ENCODE measurements at regions of chr6 and their contacts with region 1.

Region 1: DNA sequence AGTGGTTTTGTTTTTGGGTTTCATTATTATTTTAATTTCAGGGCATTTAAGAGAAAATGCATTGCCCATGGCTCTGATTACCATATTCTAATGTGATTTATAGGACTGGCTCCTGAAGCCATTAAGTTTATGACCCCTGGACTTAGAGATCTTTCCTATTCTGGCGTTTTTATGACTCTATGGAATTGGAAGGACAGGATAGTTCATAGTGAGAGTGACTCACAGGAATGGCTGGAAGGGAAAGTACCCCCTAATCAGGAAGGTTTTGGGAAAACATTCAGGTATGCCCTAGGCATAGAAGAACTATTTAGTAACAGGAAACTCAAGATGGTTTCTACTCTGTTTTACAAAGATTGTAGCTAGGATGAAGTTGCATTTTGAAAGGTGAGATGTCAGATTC is 108.6 kb upstream of the SLC2A12 start:
- DNase-seq: no peak
- ATAC-seq: peak in 1 of 2 donors; percentile 29

Region 2: DNA sequence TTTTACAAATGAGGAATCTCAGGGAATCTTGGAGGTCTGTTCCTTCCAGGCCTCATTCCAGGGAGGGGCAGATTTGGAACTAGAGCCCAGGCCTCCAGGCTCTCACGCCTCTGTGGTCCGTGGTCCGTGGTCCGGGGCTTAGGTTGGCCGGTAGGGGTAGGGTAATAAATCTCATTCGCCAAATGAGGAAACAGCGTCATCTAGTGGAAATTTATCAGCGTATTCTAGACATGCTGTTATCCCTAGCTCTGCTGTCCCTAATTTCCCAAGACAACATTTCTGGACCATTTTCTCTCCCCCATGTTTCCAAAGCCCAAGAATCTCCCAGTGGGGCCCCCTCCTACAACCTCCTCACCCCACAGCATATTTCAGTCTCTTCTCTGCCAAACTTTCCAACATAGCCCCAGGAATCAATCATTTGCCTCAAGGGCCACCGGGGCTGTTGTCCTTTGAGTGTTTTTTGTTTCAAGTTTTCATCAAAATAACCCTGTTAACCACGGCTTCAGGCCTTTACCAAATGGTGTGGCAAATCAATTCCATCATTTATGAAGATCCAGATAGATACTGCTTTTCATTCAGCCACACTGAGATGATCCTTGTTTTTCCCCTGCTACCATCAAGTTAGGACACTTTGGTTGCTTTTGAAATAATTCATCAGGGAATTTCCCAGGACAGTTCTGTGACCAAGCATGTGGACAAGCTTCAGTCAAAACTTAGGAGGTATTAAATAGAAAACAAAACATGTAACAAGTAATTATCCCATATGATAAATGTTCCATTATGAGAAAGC is 662.1 kb after region 1 on chr6:
- intact Hi-C with region 1: loop called in 1 of 2 experiments (anchors 5 kb)
- DNase-seq: peak; percentile 47
- ATAC-seq: peak; percentile 78 to 90

Region 3: DNA sequence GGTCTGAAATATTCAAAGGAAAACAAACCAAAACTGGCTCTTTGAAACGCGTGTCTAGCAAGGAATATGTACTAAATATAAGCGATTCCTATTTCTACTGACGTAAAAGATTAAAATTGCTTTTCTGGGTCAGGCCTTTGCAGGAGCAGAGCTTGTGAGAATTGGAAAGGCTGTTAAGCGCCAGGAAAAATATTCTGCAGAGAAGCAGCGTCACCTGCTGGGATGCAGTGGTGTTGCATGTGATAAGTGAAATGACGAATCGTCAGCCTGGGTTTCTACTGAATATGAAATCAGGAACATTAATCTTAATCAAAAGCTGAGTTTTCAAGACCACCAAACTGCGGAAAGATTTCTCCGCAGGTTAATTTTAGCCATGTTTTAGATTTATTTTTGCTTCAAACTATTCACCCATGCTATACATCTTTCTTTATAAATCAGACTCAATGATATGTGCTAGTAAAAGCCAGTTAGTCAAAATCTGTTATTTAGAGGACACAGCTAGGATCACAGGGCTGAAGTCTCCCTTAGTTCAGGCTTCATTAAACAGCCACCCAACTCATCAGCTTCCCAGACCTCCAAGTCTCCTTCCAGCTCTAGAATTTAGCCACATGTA is 721.5 kb after region 1 on chr6:
- intact Hi-C with region 1: loop called (anchors 2 to 5 kb)
- DNase-seq: peak; percentile 56
- ATAC-seq: peak; percentile 70 to 86